Prostate gland (tissue), 2 donors: ENCODE measurements at regions of chr2 and their contacts with region 1.

Region 1: GRCh38 chr2:70086838-70087701 is at the start of gene PCBP1:
- DNase-seq: peak; percentile 89
- H3K4me3 ChIP-seq: peak within 1 kb of the TSS; percentile 70 to 80
- H3K27ac ChIP-seq: peak within 1 kb of the TSS; percentile 98 to 100
- H3K4me1 ChIP-seq: peaks cover 14% of the 10 kb centered on the region
- H3K27me3 ChIP-seq: no peaks in the 10 kb centered on the region
- CTCF ChIP-seq: no peak
- POLR2A ChIP-seq: peak; percentile 81
- total RNA-seq, gene PCBP1: 166 to 219 TPM

Region 2: GRCh38 chr2:69914170-69914960 is 172.7 kb before region 1 on chr2:
- intact Hi-C with region 1: loop called (anchors 2 kb)
- DNase-seq: peak; percentile 100
- H3K4me3 ChIP-seq: peak overlapping the region; percentile 51 to 98
- H3K27ac ChIP-seq: peak overlapping the region; percentile 99 to 100
- H3K4me1 ChIP-seq: no peaks in the 10 kb centered on the region
- H3K27me3 ChIP-seq: no peaks in the 10 kb centered on the region
- CTCF ChIP-seq: peak in 3 of 4 experiments; percentile 38 to 61 (median 38)
- POLR2A ChIP-seq: peak; percentile 99

Region 3: GRCh38 chr2:69997015-69997830 is 89.8 kb before region 1 on chr2:
- intact Hi-C with region 1: no loop called
- DNase-seq: no peak
- H3K4me3 ChIP-seq: no peak overlapping the region
- H3K27ac ChIP-seq: no peak overlapping the region
- H3K4me1 ChIP-seq: no peaks in the 10 kb centered on the region
- H3K27me3 ChIP-seq: no peaks in the 10 kb centered on the region
- CTCF ChIP-seq: no peak
- POLR2A ChIP-seq: no peak

Region 4: GRCh38 chr2:70124983-70125480 is 38.0 kb after region 1 on chr2:
- intact Hi-C with region 1: loop called (anchors 2 kb)
- DNase-seq: peak; percentile 39
- H3K4me3 ChIP-seq: peak overlapping the region; percentile 35 to 49
- H3K27ac ChIP-seq: peak overlapping the region; percentile 94 to 98
- H3K4me1 ChIP-seq: no peaks in the 10 kb centered on the region
- H3K27me3 ChIP-seq: no peaks in the 10 kb centered on the region
- CTCF ChIP-seq: no peak
- POLR2A ChIP-seq: no peak

Region 5: DNA sequence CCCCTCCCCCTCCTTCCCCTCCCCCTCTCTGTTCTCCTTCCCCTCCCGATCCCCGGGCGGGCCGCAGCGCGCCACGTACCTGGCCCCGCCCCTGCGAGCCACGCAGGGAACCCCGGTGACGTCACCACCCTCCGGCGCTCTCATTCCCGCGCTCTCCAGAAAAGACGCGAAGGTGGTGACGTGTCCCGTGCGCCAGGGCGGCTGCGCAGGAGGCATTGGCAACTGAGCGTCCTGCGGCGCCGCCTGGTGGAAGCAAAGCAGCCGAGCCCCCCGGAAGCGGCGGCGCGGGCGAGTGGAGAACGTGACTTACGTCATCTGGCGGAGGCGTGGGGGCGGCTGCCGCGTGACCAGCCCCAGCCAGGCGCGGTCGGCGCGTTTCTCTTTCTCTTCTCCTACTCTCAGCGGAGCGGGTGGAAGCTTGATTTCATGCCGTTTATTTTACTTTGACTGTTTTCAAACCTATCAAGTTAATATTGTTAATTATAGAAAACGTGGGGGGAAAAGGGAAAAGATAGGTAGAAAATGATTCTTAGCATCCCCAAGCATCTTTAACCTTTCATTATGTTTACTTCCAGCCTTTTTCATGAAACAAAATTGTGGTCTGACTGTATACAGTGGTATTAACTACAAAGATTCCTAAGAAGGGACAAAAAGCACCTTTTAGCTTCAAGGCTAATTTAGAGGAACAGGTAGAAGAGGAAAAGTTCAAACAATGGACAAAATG is 55.7 kb after region 1 on chr2:
- intact Hi-C with region 1: loop called (anchors 1 kb)
- DNase-seq: peak; percentile 99
- H3K4me3 ChIP-seq: peak overlapping the region; percentile 57 to 64
- H3K27ac ChIP-seq: peak overlapping the region; percentile 98 to 100
- H3K4me1 ChIP-seq: no peaks in the 10 kb centered on the region
- H3K27me3 ChIP-seq: no peaks in the 10 kb centered on the region
- CTCF ChIP-seq: peak; percentile 97 to 100 (median 98)
- POLR2A ChIP-seq: peak; percentile 93

Region 6: GRCh38 chr2:70190418-70191243 is 103.6 kb after region 1 on chr2 and contains the start of gene C2orf42:
- intact Hi-C with region 1: loop called (anchors 5 kb)
- DNase-seq: peak; percentile 96
- H3K4me3 ChIP-seq: peak within 1 kb of the TSS; percentile 62 to 77
- H3K27ac ChIP-seq: peak within 1 kb of the TSS; percentile 97 to 98
- H3K4me1 ChIP-seq: no peaks in the 10 kb centered on the region
- H3K27me3 ChIP-seq: no peaks in the 10 kb centered on the region
- CTCF ChIP-seq: peak in 1 of 4 experiments; percentile 8
- POLR2A ChIP-seq: peak; percentile 79
- total RNA-seq, gene C2orf42: 23.6 to 27.9 TPM

Region 7: GRCh38 chr2:70248181-70248847 is 161.2 kb after region 1 on chr2 and contains the start of gene TIA1:
- intact Hi-C with region 1: loop called (anchors 10 kb)
- DNase-seq: peak; percentile 99
- H3K4me3 ChIP-seq: peak within 1 kb of the TSS; percentile 72 to 87
- H3K27ac ChIP-seq: peak within 1 kb of the TSS; percentile 97 to 99
- H3K4me1 ChIP-seq: no peaks in the 10 kb centered on the region
- H3K27me3 ChIP-seq: no peaks in the 10 kb centered on the region
- CTCF ChIP-seq: no peak
- POLR2A ChIP-seq: peak; percentile 89
- total RNA-seq, gene TIA1: 65.3 to 100 TPM

Region 8: DNA sequence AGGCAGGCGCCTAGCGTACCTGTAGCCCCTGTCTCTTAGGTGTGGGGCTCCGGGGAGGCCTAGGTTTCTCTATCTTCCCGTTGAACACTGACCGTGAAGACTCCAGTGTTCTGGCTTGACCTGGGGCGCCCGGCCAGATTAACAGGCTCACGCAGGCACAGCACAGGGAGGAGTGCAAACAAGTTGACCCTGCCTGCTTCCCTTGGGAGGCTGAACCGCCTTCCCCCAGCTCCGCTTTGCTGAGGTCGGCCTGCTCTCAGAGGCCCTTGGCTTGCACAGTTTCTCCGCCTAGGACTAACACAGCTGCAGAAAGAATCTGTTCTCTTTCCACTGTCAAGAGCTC is 171.4 kb after region 1 on chr2:
- intact Hi-C with region 1: no loop called
- DNase-seq: peak; percentile 38
- H3K4me3 ChIP-seq: peak overlapping the region; percentile 88 to 93
- H3K27ac ChIP-seq: peak overlapping the region; percentile 87 to 93
- H3K4me1 ChIP-seq: peaks cover 18% of the 10 kb centered on the region
- H3K27me3 ChIP-seq: no peaks in the 10 kb centered on the region
- CTCF ChIP-seq: no peak
- POLR2A ChIP-seq: no peak

Region 9: DNA sequence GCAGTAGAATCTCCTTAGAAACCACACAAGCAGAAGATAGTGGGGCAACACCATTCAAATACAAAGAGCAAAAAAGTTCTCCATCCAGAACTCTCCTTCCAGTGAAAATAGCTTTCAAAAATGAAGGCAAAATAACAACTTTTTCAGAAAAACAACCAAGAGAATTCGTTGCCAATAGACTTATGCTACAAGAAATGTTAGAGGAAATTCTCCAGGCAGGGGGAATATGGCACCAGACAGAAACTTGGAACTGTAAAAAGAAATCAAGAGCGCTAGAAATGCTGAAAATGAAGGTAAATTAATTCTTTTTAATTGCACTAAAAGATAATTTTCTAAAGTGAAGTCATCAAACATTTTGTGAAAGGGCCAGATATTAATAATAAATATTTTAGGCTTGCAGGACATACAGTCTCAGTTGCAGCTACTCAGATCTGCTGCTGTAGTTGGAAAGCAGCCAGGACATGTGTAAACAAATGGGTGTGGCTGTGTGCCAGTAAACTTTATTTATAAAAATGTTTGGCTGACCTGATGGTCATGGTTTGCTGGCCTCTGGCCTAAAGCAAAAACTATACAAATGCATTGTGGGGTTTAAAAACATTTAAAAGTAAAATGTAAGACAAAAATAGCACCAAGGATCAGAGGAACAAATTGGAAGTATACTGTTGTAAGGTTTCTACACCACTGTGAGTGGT is 540.3 kb after region 1 on chr2:
- intact Hi-C with region 1: no loop called
- DNase-seq: no peak
- H3K4me3 ChIP-seq: no peak overlapping the region
- H3K27ac ChIP-seq: no peak overlapping the region
- H3K4me1 ChIP-seq: no peaks in the 10 kb centered on the region
- H3K27me3 ChIP-seq: no peaks in the 10 kb centered on the region
- CTCF ChIP-seq: no peak
- POLR2A ChIP-seq: no peak